ENCODE measurements at regions of chr3 and their contacts with region 1.

Region 1: GRCh38 chr3:112293368-112294321 is at the start of gene SLC9C1:
- DNase-seq: peak; percentile 81
- H3K4me3 ChIP-seq: peak within 1 kb of the TSS; percentile 38 to 49 (median 47)
- H3K27ac ChIP-seq: peak within 1 kb of the TSS; percentile 63
- H3K4me1 ChIP-seq: peaks cover 6% of the 10 kb centered on the region
- H3K27me3 ChIP-seq: no peaks in the 10 kb centered on the region
- CTCF ChIP-seq: peak; percentile 62 to 73
- total RNA-seq, gene SLC9C1: 0.47 to 1.7 TPM

Region 2: GRCh38 chr3:112013058-112013783 is 280.4 kb before region 1 on chr3:
- CTCF ChIA-PET with region 1: no interaction called
- dilution Hi-C with region 1: no loop called
- in situ Hi-C with region 1: no loop called
- intact Hi-C with region 1: no loop called
- DNase-seq: peak; percentile 62
- H3K4me3 ChIP-seq: no peak overlapping the region
- H3K27ac ChIP-seq: no peak overlapping the region
- H3K4me1 ChIP-seq: no peaks in the 10 kb centered on the region
- H3K27me3 ChIP-seq: no peaks in the 10 kb centered on the region
- CTCF ChIP-seq: peak; percentile 83 to 86

Region 3: GRCh38 chr3:112111785-112112402 is 181.8 kb before region 1 on chr3:
- CTCF ChIA-PET with region 1: no interaction called
- dilution Hi-C with region 1: no loop called
- in situ Hi-C with region 1: loop called in 1 of 2 experiments (anchors 10 kb)
- intact Hi-C with region 1: loop called (anchors 1 kb)
- DNase-seq: peak; percentile 71
- H3K4me3 ChIP-seq: no peak overlapping the region
- H3K27ac ChIP-seq: no peak overlapping the region
- H3K4me1 ChIP-seq: no peaks in the 10 kb centered on the region
- H3K27me3 ChIP-seq: no peaks in the 10 kb centered on the region
- CTCF ChIP-seq: peak; percentile 88

Region 4: GRCh38 chr3:112136959-112137693 is 156.5 kb before region 1 on chr3:
- CTCF ChIA-PET with region 1: no interaction called
- dilution Hi-C with region 1: no loop called
- in situ Hi-C with region 1: no loop called
- intact Hi-C with region 1: loop called (anchors 1 kb)
- DNase-seq: peak; percentile 53
- H3K4me3 ChIP-seq: no peak overlapping the region
- H3K27ac ChIP-seq: no peak overlapping the region
- H3K4me1 ChIP-seq: peaks cover 9% of the 10 kb centered on the region
- H3K27me3 ChIP-seq: no peaks in the 10 kb centered on the region
- CTCF ChIP-seq: peak; percentile 77 to 79

Region 5: DNA sequence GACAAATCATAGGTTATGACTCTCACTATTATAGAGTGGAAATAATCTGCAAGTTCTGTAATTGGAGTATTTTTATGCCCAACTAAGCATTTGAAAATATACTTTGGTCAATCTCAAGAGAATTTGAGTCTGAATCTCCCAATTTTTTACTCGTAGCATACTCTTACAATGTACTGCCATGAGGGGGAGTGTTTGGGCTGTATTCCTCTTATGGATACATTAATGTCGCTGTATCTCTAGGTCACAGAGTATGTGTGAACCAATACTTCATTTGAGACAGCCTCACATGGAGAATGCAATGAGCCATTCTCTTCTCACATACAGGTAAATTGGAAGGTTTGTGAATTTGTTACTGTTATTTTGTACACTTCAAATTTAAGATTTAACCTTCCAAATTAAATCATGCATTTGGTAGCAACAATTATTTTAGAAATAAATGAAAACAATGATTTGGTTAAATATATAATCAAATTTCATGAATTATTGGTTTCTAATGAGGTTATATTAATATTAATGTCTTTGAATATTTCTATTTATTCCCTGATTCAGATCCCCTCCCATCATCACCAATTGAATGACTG is 33.8 kb after region 1 on chr3:
- CTCF ChIA-PET with region 1: interaction called, 5 read pairs
- dilution Hi-C with region 1: no loop called
- in situ Hi-C with region 1: no loop called
- intact Hi-C with region 1: loop called (anchors 1 kb)
- DNase-seq: peak; percentile 61
- H3K4me3 ChIP-seq: no peak overlapping the region
- H3K27ac ChIP-seq: no peak overlapping the region
- H3K4me1 ChIP-seq: no peaks in the 10 kb centered on the region
- H3K27me3 ChIP-seq: no peaks in the 10 kb centered on the region
- CTCF ChIP-seq: peak; percentile 72 to 76

Region 6: DNA sequence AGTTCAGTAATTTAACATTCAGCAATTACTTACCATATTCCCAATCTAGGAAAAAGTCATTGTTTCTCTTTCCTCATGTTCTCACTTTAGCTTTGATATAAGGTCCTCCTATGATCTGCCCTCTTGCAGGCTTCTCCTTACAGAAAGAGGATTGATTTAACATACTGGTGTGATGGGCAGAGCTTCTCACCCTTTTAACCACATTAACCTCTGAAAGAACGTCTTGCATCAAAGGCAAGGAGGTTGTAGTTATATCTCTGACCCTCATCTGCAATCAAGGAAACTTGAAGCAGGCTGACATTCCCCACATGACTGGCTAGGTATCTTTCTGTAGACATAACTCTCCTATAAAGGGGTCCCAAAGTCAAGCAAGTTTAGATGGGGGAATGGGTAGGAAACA is 166.1 kb after region 1 on chr3:
- CTCF ChIA-PET with region 1: no interaction called
- dilution Hi-C with region 1: no loop called
- in situ Hi-C with region 1: no loop called
- intact Hi-C with region 1: no loop called
- DNase-seq: no peak
- H3K4me3 ChIP-seq: no peak overlapping the region
- H3K27ac ChIP-seq: no peak overlapping the region
- H3K4me1 ChIP-seq: no peaks in the 10 kb centered on the region
- H3K27me3 ChIP-seq: peaks cover 5% of the 10 kb centered on the region
- CTCF ChIP-seq: no peak

Region 7: DNA sequence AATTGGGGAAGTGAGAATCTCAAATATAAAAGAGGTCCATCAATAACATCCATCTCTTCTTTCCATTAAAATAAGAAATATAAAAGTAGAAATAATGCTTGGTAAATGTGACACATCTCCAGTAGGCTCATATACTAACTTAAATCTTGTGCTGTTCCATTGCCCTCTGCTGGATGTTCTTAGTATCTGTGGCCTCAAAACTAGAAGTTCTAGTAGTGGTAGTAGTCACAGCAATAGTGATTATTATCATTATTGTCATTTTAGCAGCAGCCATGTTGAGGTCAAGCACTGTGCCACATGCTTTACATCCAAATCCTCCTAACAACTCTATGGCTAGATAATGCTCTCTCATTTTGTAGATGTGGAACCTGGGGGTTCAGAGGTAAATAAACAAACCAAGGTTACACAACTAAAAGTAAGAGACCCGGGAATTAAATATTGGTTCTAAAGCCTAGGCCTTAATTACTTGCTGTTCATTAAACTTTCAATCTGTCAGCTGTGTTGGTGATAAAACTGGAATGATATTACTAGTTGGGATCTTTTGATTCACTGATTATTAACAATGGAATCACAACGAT is 225.9 kb after region 1 on chr3:
- CTCF ChIA-PET with region 1: interaction called, 6 read pairs
- dilution Hi-C with region 1: no loop called
- in situ Hi-C with region 1: loop called (anchors 10 to 25 kb)
- intact Hi-C with region 1: loop called (anchors 1 kb)
- DNase-seq: peak; percentile 58
- H3K4me3 ChIP-seq: no peak overlapping the region
- H3K27ac ChIP-seq: no peak overlapping the region
- H3K4me1 ChIP-seq: no peaks in the 10 kb centered on the region
- H3K27me3 ChIP-seq: no peaks in the 10 kb centered on the region
- CTCF ChIP-seq: peak; percentile 74 to 76